Naive thymus-derived CD4-positive, alpha-beta T cell (primary cell): ENCODE measurements at regions of chr21 and their contacts with region 1.

Region 1: DNA sequence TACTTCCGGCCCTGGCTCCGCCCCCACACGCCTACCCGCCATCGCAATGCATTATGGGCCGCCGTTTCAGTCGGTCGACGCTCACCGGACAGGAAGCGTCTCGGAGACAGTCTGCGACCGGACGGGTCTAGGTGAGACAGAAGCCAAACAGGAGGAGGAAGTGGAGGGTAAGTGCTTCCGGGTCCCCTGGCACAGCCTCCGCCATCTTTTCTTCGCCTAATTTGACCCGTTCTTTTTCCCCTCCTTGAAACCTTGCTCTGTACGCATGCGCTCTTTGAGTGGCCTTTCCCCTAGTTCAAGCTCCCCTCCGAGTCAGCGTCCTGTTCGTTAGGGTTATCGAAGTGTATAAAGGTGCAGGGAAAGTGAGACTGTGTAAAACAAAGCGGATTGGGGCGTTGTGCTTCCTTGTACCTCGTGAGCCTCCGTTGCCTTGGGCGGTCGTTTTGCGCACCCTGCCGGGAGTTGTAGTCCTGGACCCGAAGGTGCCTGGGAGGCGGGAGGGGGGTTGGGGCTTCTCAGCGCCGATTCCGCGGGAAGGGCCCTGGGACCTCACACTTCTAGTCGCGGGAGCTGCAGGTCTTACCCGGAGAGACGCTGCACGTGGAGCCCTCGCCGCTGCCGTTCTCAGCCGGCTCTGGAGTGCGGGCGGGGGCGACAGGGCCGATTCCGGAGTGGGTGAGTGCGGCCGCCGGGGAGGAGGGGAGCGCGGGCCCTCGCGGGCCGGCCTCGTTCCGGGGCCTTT is at the starts of genes ATP5PF and GABPA:
- DNase-seq: peak; percentile 95 to 99 (median 97)
- ATAC-seq: peak; percentile 96
- H3K4me3 ChIP-seq: peak within 1 kb of the TSS; percentile 96
- H3K4me3 Mint-ChIP-seq: peak within 1 kb of the TSS; percentile 98 to 100 (median 100)
- H3K27ac ChIP-seq: peak within 1 kb of the TSS; percentile 88
- H3K27ac Mint-ChIP-seq: peak within 1 kb of the TSS; percentile 98 to 100 (median 100)
- H3K4me1 ChIP-seq: peaks cover 0 to 13% of the 10 kb centered on the region in 2 donors
- H3K4me1 Mint-ChIP-seq: peaks cover 35 to 78% (median 64%) of the 10 kb centered on the region in 7 donors
- H3K27me3 ChIP-seq: no peaks in the 10 kb centered on the region
- H3K27me3 Mint-ChIP-seq: peaks cover 0 to 4% (median 0%) of the 10 kb centered on the region in 5 donors
- total RNA-seq, gene ATP5PF: 39.5 to 124 (median 58.6) TPM
- total RNA-seq, gene GABPA: 23.1 to 31.9 (median 29.4) TPM

Region 2: DNA sequence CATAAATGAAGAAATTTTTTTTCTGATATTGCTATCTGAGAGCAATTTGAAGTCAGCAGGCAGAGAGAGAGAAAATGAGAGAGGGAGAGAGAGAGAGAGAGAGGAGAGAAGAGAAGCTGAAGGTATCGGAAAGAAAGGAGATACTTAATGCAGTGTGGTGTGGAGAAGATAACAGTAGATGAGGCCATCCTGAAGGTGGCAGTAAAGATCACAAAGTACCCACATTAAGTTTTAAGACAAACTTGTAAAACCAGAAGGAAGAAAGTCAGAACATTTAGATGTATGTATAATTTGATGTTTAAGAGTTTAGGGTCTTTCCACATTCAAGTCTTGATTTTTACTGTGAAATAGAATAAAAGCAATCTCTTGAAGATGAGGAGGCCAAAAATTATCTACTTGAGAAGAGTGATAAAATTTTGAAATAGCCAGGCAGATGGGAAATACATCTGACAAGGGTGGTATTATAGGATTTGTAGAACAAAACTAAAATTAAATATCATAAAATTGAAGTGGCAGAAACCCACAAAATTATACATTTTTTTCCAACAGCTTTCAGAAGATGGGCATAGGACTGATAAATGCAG is 1881.2 kb before region 1 on chr21:
- CTCF ChIA-PET with region 1: no interaction called
- POLR2A ChIA-PET with region 1: no interaction called
- intact Hi-C with region 1: no loop called
- DNase-seq: peak in 6 of 9 donors; percentile 18 to 56 (median 34)
- ATAC-seq: peak; percentile 75
- H3K4me3 ChIP-seq: no peak overlapping the region
- H3K4me3 Mint-ChIP-seq: no peak overlapping the region
- H3K27ac ChIP-seq: no peak overlapping the region
- H3K27ac Mint-ChIP-seq: peak overlapping the region in 1 of 9 donors; percentile 6
- H3K4me1 ChIP-seq: no peaks in the 10 kb centered on the region
- H3K4me1 Mint-ChIP-seq: peaks cover 4 to 11% (median 6%) of the 10 kb centered on the region in 7 donors
- H3K27me3 ChIP-seq: no peaks in the 10 kb centered on the region
- H3K27me3 Mint-ChIP-seq: peaks cover 0 to 8% (median 0%) of the 10 kb centered on the region in 5 donors

Region 3: DNA sequence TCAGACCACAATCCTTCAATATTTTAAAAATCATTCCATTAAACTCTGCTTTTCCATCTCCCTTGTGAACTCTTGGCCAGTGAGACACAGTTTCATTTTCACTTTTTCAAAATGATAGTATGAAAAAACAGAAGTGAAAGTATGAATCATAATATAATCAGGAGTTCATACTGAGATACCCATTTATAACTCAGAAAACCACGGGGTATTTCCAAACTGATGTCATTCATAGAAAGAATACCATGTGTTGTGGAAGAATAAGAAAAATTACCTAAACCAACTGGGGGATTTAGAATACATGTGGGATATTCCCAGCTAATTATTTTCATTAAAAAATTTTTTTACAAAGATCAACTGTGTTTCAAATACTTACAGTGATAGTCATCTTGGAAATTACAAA is 277.7 kb before region 1 on chr21:
- CTCF ChIA-PET with region 1: no interaction called
- POLR2A ChIA-PET with region 1: no interaction called
- intact Hi-C with region 1: loop called (anchors 1 to 5 kb)
- DNase-seq: peak in 6 of 9 donors; percentile 11 to 49 (median 34)
- ATAC-seq: peak; percentile 95
- H3K4me3 ChIP-seq: peak overlapping the region; percentile 1
- H3K4me3 Mint-ChIP-seq: peak overlapping the region; percentile 65 to 91 (median 82)
- H3K27ac ChIP-seq: peak overlapping the region; percentile 40
- H3K27ac Mint-ChIP-seq: peak overlapping the region; percentile 81 to 91 (median 86)
- H3K4me1 ChIP-seq: peaks cover 0 to 5% of the 10 kb centered on the region in 2 donors
- H3K4me1 Mint-ChIP-seq: peaks cover 5 to 39% (median 24%) of the 10 kb centered on the region in 7 donors
- H3K27me3 ChIP-seq: no peaks in the 10 kb centered on the region
- H3K27me3 Mint-ChIP-seq: no peaks in the 10 kb centered on the region

Region 4: DNA sequence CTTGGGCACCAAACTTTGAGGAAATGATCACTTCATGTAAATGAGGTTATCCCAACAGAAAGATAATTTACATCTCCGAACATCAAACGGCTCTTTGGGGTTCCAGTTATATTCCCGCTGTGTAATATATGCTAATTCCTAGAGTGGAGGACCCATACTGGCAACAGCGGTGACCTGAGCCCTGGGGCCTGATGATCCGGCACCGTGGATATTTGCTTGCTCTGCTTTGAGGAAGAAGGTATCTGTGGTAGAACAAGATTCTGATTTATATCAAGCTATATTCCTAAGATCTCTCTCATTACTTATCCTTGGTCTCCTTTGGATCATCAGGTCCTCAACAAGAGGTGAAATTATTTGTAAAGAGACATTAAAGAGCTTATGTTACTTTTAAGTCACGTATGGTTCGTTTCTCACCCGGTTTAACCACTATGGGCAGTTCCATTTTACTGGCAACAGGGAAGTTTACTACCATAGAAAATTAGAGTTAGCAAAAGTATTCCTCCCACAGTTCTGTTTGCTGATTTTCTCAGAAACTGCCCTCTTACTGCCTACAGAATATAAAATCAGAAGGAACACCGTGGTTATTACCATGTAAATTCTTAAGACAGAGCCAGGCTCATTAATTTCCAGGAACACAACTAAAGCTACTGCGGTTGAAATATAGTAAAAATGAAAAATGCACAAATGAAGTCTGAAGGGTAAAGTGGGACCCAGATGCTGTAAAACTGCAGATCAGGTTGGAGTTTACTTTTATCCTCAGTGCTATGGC is 184.5 kb before region 1 on chr21:
- CTCF ChIA-PET with region 1: no interaction called
- POLR2A ChIA-PET with region 1: no interaction called
- intact Hi-C with region 1: no loop called
- DNase-seq: no peak
- ATAC-seq: no peak
- H3K4me3 ChIP-seq: no peak overlapping the region
- H3K4me3 Mint-ChIP-seq: no peak overlapping the region
- H3K27ac ChIP-seq: no peak overlapping the region
- H3K27ac Mint-ChIP-seq: no peak overlapping the region
- H3K4me1 ChIP-seq: no peaks in the 10 kb centered on the region
- H3K4me1 Mint-ChIP-seq: peaks cover 0 to 7% (median 0%) of the 10 kb centered on the region in 7 donors
- H3K27me3 ChIP-seq: no peaks in the 10 kb centered on the region
- H3K27me3 Mint-ChIP-seq: peaks cover 0 to 4% (median 0%) of the 10 kb centered on the region in 5 donors

Region 5: DNA sequence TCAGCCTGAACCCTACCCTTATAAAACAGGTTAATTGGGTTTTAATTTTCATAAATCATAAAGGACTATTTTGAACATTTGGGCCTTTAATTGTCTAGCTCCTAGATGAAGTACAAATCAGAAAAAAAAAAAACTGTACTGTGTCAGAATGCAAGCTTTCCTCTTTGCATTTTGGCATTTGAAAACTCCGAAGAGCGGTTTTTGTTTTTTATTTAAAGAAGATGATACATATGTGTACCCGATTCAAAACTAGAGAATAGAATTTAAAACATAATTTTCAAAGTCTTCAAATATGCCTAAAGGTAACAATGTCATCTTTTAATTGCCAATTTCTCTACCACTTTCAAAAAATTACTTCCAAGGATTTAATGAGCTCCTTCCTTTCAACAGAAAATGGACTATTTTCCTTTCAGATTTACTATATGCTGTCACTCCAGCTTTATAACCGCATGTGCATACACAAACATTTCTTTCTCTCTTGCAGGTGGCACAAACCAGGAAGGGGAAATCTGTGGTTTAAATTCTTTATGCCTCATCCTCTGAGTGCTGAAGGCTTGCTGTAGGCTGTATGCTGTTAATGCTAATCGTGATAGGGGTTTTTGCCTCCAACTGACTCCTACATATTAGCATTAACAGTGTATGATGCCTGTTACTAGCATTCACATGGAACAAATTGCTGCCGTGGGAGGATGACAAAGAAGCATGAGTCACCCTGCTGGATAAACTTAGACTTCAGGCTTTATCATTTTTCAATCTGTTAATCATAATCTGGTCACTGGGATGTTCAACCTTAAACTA is 161.5 kb before region 1 on chr21:
- CTCF ChIA-PET with region 1: no interaction called
- POLR2A ChIA-PET with region 1: no interaction called
- intact Hi-C with region 1: loop called in 1 of 2 experiments (anchors 1 kb)
- DNase-seq: peak in 8 of 9 donors; percentile 42 to 63 (median 52)
- ATAC-seq: peak; percentile 81
- H3K4me3 ChIP-seq: peak overlapping the region; percentile 33
- H3K4me3 Mint-ChIP-seq: peak overlapping the region; percentile 72 to 92 (median 80)
- H3K27ac ChIP-seq: peak overlapping the region; percentile 42
- H3K27ac Mint-ChIP-seq: peak overlapping the region; percentile 80 to 94 (median 90)
- H3K4me1 ChIP-seq: peaks cover 4 to 15% of the 10 kb centered on the region in 2 donors
- H3K4me1 Mint-ChIP-seq: peaks cover 12 to 72% (median 37%) of the 10 kb centered on the region in 7 donors
- H3K27me3 ChIP-seq: no peaks in the 10 kb centered on the region
- H3K27me3 Mint-ChIP-seq: no peaks in the 10 kb centered on the region

Region 6: DNA sequence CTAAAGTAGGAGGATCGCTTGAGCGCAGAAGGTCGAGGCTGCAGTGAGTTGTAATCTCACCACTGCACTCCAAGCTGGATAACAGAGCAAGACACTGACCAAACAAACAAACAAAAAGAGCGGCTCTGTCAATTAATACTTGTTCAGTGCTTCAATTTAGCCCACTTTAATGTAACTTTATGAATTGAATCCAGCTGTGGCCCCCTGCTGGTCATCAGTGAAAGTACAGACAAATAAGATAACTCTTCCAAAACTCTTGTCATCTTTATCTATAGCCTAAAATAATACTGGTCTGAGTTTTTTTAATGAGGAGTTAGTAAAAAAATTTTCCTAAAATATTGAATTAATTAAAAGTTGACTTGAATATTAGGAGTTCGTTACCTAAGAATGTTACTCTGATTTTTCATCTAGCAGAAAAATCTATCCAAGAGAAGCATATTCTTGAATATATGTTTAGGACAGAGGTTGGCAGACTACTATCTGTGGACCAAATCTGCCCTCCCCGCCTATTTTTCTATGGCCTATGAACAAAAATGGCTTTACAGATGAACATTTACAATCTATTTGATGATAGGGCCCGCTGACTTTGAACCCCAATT is 26.5 kb before region 1 on chr21:
- CTCF ChIA-PET with region 1: interaction called, 3 read pairs
- POLR2A ChIA-PET with region 1: interaction called, 3 read pairs
- intact Hi-C with region 1: loop called in 1 of 2 experiments (anchors 1 kb)
- DNase-seq: peak in 8 of 9 donors; percentile 17 to 56 (median 39)
- ATAC-seq: peak; percentile 67
- H3K4me3 ChIP-seq: no peak overlapping the region
- H3K4me3 Mint-ChIP-seq: no peak overlapping the region
- H3K27ac ChIP-seq: no peak overlapping the region
- H3K27ac Mint-ChIP-seq: no peak overlapping the region
- H3K4me1 ChIP-seq: no peaks in the 10 kb centered on the region
- H3K4me1 Mint-ChIP-seq: peaks cover 0 to 5% (median 0%) of the 10 kb centered on the region in 7 donors
- H3K27me3 ChIP-seq: no peaks in the 10 kb centered on the region
- H3K27me3 Mint-ChIP-seq: no peaks in the 10 kb centered on the region

Region 7: GRCh38 chr21:25757531-25757930 is 22.5 kb after region 1 on chr21:
- CTCF ChIA-PET with region 1: no interaction called
- POLR2A ChIA-PET with region 1: no interaction called
- intact Hi-C with region 1: loop called in 1 of 2 experiments (anchors 2 kb)
- DNase-seq: no peak
- ATAC-seq: no peak
- H3K4me3 ChIP-seq: no peak overlapping the region
- H3K4me3 Mint-ChIP-seq: no peak overlapping the region
- H3K27ac ChIP-seq: no peak overlapping the region
- H3K27ac Mint-ChIP-seq: peak overlapping the region in 1 of 9 donors; percentile 8
- H3K4me1 ChIP-seq: no peaks in the 10 kb centered on the region
- H3K4me1 Mint-ChIP-seq: peaks cover 8 to 47% (median 17%) of the 10 kb centered on the region in 7 donors
- H3K27me3 ChIP-seq: no peaks in the 10 kb centered on the region
- H3K27me3 Mint-ChIP-seq: no peaks in the 10 kb centered on the region

Region 8: DNA sequence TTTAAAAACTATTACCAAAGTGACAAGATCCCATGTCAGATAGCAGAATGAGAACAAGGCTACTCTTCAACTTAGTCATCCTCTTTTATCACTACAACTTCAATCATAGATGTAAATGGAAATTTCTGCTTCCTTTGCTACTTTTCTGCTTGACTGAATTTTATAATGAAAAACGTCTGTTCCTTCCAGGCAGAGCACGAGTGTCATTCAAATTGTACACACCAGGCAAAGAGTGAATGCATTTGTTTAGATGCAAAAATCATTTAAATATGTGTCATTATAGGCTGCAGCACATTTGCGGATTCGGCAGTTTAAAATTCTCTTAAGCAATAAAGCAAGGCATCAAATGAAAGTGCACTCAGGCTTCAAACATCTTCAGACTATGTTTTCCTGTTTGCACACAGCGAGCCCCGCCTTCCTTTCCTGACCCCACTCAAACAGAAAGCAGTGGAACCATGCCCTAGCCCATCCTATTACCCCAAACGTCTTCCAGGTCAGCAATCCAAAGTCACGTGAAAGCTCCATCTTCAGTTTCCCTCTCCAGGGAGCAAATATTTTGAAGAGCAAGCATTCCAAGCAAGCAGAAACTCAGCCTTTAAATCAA is 335.8 kb after region 1 on chr21:
- CTCF ChIA-PET with region 1: no interaction called
- POLR2A ChIA-PET with region 1: no interaction called
- intact Hi-C with region 1: loop called in 1 of 2 experiments (anchors 1 kb)
- DNase-seq: peak in 7 of 9 donors; percentile 36 to 61 (median 51)
- ATAC-seq: peak; percentile 85
- H3K4me3 ChIP-seq: peak overlapping the region; percentile 24
- H3K4me3 Mint-ChIP-seq: peak overlapping the region; percentile 75 to 94 (median 86)
- H3K27ac ChIP-seq: peak overlapping the region; percentile 57
- H3K27ac Mint-ChIP-seq: peak overlapping the region; percentile 87 to 94 (median 91)
- H3K4me1 ChIP-seq: peaks cover 0 to 38% of the 10 kb centered on the region in 2 donors
- H3K4me1 Mint-ChIP-seq: peaks cover 23 to 69% (median 55%) of the 10 kb centered on the region in 7 donors
- H3K27me3 ChIP-seq: no peaks in the 10 kb centered on the region
- H3K27me3 Mint-ChIP-seq: no peaks in the 10 kb centered on the region